Mammary epithelial cell (primary cell): ENCODE measurements at regions of chr14 and their contacts with region 1.

Region 1: GRCh38 chr14:37807722-37808121 is 212.3 kb downstream of the TTC6 start:
- DNase-seq: no peak
- H3K4me3 ChIP-seq: no peak overlapping the region
- H3K27ac ChIP-seq: no peak overlapping the region
- H3K4me1 ChIP-seq: no peaks in the 10 kb centered on the region
- H3K27me3 ChIP-seq: peaks cover 3% of the 10 kb centered on the region
- CTCF ChIP-seq: no peak

Region 2: DNA sequence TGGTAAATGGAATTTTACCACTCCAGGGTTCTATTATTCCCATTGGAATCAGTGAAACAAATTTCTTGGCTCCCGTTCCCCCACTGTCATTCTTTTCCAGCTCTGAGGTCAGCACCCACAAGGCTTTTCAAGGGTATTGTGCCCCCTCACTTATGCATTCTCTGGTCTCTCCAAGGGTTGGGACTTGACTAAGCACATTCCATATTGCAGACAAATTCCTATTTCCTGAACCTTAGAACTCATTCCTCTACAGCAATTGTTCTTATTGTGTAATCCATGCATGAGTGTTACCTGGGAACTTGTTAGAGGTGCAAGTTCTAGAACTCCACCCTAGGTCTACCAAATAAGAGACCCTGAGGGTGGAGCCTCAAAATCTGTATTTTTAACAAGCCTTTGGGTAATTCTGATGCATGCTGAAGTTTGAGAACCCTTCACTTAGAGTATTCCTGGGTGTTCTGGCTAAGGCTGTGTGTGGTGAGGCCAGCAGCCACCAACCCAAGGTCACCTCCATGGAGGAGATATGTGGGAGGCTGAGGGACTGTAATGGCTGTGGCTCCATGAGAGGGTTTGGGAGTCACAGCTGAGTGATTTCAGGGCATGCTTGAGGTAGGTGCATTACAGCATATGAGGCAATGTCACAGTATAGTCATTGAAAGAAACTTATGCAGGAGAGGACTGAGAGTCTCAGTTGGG is 61.4 kb before region 1 on chr14:
- CTCF ChIA-PET with region 1: no interaction called
- dilution Hi-C with region 1: no loop called
- in situ Hi-C with region 1: no loop called
- intact Hi-C with region 1: loop called (anchors 10 kb)
- DNase-seq: no peak
- H3K4me3 ChIP-seq: no peak overlapping the region
- H3K27ac ChIP-seq: no peak overlapping the region
- H3K4me1 ChIP-seq: no peaks in the 10 kb centered on the region
- H3K27me3 ChIP-seq: peaks cover 3% of the 10 kb centered on the region
- CTCF ChIP-seq: no peak

Region 3: GRCh38 chr14:37855871-37856270 is 48.1 kb after region 1 on chr14:
- CTCF ChIA-PET with region 1: no interaction called
- dilution Hi-C with region 1: no loop called
- in situ Hi-C with region 1: no loop called
- intact Hi-C with region 1: no loop called
- DNase-seq: no peak
- H3K4me3 ChIP-seq: no peak overlapping the region
- H3K27ac ChIP-seq: no peak overlapping the region
- H3K4me1 ChIP-seq: no peaks in the 10 kb centered on the region
- H3K27me3 ChIP-seq: peaks cover 4% of the 10 kb centered on the region
- CTCF ChIP-seq: no peak